ENCODE measurements at regions of chr14 and their contacts with region 1.

Region 1: GRCh38 chr14:105351920-105352851 is 37.6 kb downstream of the PACS2 start:
- DNase-seq: peak; percentile 84 to 86 (median 85)
- H3K4me3 ChIP-seq: no peak overlapping the region
- H3K4me3 Mint-ChIP-seq: no peak overlapping the region
- H3K27ac ChIP-seq: no peak overlapping the region
- H3K27ac Mint-ChIP-seq: peak overlapping the region in 3 of 7 donors; percentile 46 to 70 (median 48)
- H3K4me1 ChIP-seq: no peaks in the 10 kb centered on the region
- H3K4me1 Mint-ChIP-seq: peaks cover 3 to 4% (median 3%) of the 10 kb centered on the region in 4 donors
- H3K27me3 ChIP-seq: no peaks in the 10 kb centered on the region
- H3K27me3 Mint-ChIP-seq: no peaks in the 10 kb centered on the region

Region 2: GRCh38 chr14:104976198-104977007 is 375.8 kb before region 1 on chr14:
- CTCF ChIA-PET with region 1: no interaction called
- POLR2A ChIA-PET with region 1: no interaction called
- intact Hi-C with region 1: loop called (anchors 1 kb)
- DNase-seq: peak; percentile 80 to 87 (median 82)
- H3K4me3 ChIP-seq: no peak overlapping the region
- H3K4me3 Mint-ChIP-seq: peak overlapping the region; percentile 35 to 88 (median 64)
- H3K27ac ChIP-seq: no peak overlapping the region
- H3K27ac Mint-ChIP-seq: peak overlapping the region in 5 of 7 donors; percentile 19 to 66 (median 56)
- H3K4me1 ChIP-seq: peaks cover 17% of the 10 kb centered on the region
- H3K4me1 Mint-ChIP-seq: peaks cover 4 to 26% (median 13%) of the 10 kb centered on the region in 4 donors
- H3K27me3 ChIP-seq: peaks cover 13% of the 10 kb centered on the region
- H3K27me3 Mint-ChIP-seq: peaks cover 8 to 18% of the 10 kb centered on the region in 2 donors

Region 3: GRCh38 chr14:105086833-105087307 is 265.3 kb before region 1 on chr14:
- CTCF ChIA-PET with region 1: interaction called, 24 read pairs
- POLR2A ChIA-PET with region 1: interaction called, 3 read pairs
- intact Hi-C with region 1: no loop called
- DNase-seq: peak; percentile 81 to 87 (median 84)
- H3K4me3 ChIP-seq: peak overlapping the region; percentile 23 to 57
- H3K4me3 Mint-ChIP-seq: peak overlapping the region; percentile 71 to 83 (median 78)
- H3K27ac ChIP-seq: peak overlapping the region; percentile 26
- H3K27ac Mint-ChIP-seq: peak overlapping the region in 3 of 7 donors; percentile 15 to 91 (median 77)
- H3K4me1 ChIP-seq: peaks cover 23% of the 10 kb centered on the region
- H3K4me1 Mint-ChIP-seq: peaks cover 13 to 24% (median 16%) of the 10 kb centered on the region in 4 donors
- H3K27me3 ChIP-seq: no peaks in the 10 kb centered on the region
- H3K27me3 Mint-ChIP-seq: peaks cover 0 to 1% of the 10 kb centered on the region in 2 donors

Region 4: GRCh38 chr14:105193916-105194782 is 158.0 kb before region 1 on chr14:
- CTCF ChIA-PET with region 1: interaction called, 3 read pairs
- POLR2A ChIA-PET with region 1: no interaction called
- intact Hi-C with region 1: loop called (anchors 2 kb)
- DNase-seq: peak in 1 of 5 donors; percentile 66
- H3K4me3 ChIP-seq: no peak overlapping the region
- H3K4me3 Mint-ChIP-seq: peak overlapping the region in 7 of 8 donors; percentile 21 to 74 (median 34)
- H3K27ac ChIP-seq: no peak overlapping the region
- H3K27ac Mint-ChIP-seq: peak overlapping the region in 3 of 7 donors; percentile 64 to 91 (median 79)
- H3K4me1 ChIP-seq: peaks cover 47% of the 10 kb centered on the region
- H3K4me1 Mint-ChIP-seq: peaks cover 14 to 39% (median 21%) of the 10 kb centered on the region in 4 donors
- H3K27me3 ChIP-seq: peaks cover 8% of the 10 kb centered on the region
- H3K27me3 Mint-ChIP-seq: peaks cover 17 to 23% of the 10 kb centered on the region in 2 donors

Region 5: DNA sequence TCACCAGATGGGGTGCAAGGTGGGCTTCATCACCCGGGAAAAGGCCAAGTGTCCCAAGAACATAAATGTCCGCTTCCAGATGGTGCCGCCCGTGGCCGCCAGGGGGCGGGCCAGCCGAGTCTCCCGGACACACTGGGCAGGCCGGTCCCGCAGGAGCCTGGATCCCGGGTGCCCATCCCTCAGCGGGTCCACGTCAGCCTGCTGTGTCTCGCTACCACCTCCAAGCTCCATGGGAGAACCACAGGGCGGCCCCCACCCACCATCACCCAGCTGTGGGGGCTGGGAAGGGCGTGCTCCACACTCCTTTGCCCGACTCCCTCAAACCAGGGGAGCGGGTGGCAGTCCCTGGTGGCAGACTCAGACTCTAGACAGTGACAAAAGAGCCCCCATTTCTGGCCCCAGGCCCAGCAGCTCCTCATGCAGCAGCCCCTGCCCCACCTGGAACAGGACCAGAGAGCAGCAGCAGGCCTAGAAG is 149.1 kb before region 1 on chr14:
- CTCF ChIA-PET with region 1: interaction called, 35 read pairs
- POLR2A ChIA-PET with region 1: interaction called, 4 read pairs
- intact Hi-C with region 1: loop called (anchors 1 kb)
- DNase-seq: peak; percentile 49 to 63 (median 53)
- H3K4me3 ChIP-seq: no peak overlapping the region
- H3K4me3 Mint-ChIP-seq: no peak overlapping the region
- H3K27ac ChIP-seq: no peak overlapping the region
- H3K27ac Mint-ChIP-seq: peak overlapping the region in 1 of 7 donors; percentile 40
- H3K4me1 ChIP-seq: peaks cover 21% of the 10 kb centered on the region
- H3K4me1 Mint-ChIP-seq: peaks cover 3 to 22% (median 13%) of the 10 kb centered on the region in 4 donors
- H3K27me3 ChIP-seq: no peaks in the 10 kb centered on the region
- H3K27me3 Mint-ChIP-seq: peaks cover 11 to 14% of the 10 kb centered on the region in 2 donors

Region 6: DNA sequence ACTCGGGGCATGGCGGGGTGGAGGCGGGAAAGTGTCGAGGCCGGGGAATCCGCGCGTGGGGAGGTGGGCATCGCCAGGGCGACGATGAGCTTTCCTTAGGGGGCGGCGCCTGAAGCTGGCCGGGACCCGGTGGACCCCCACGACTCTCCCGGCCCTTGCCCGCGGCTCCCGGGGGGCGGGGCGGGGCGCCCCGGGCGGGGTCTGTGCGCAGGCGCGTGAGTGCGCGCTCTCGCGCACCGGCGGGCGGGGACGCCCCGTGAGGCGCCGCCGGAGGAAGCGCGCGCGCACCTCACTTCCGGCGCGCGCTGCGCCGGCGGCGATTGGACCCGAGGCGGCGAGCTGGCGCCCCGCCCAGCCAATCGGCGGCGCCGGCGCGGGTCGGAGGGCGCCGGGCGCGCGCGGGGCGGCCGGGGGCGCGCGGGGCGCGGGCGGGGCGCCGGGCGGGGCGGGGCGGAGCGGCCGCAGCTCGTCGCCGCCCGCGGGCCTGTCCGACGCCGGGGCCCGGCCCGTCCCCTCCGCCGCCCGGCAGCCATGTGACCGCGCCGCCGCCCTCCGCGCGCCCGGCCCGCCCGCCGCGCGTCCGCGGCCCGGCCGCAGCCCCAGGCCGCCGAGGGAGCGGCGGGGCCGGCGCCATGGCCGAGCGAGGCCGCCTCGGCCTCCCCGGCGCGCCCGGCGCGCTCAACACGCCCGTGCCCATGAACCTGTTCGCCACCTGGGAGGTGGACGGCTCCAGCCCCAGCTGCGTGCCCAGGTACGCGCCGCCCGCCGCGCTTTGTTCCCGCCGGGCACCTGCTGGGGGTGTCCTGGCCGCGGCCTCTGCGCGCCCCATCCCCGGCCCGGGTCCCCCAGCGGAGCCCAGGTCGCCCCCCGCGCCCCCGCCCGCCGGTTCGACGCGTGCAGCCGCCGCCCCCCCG is 37.6 kb before region 1 on chr14 and contains the start of gene PACS2:
- CTCF ChIA-PET with region 1: interaction called, 5 read pairs
- POLR2A ChIA-PET with region 1: interaction called, 3 read pairs
- intact Hi-C with region 1: loop called (anchors 1 kb)
- DNase-seq: peak; percentile 61 to 87 (median 83)
- H3K4me3 ChIP-seq: peak within 1 kb of the TSS; percentile 49 to 52
- H3K4me3 Mint-ChIP-seq: peak within 1 kb of the TSS; percentile 84 to 93 (median 86)
- H3K27ac ChIP-seq: peak within 1 kb of the TSS; percentile 62
- H3K27ac Mint-ChIP-seq: peak within 1 kb of the TSS; percentile 86 to 94 (median 90)
- H3K4me1 ChIP-seq: peaks cover 22% of the 10 kb centered on the region
- H3K4me1 Mint-ChIP-seq: peaks cover 7 to 31% (median 22%) of the 10 kb centered on the region in 4 donors
- H3K27me3 ChIP-seq: no peaks in the 10 kb centered on the region
- H3K27me3 Mint-ChIP-seq: no peaks in the 10 kb centered on the region
- total RNA-seq, gene PACS2: 70.9 to 76.6 TPM

Region 7: DNA sequence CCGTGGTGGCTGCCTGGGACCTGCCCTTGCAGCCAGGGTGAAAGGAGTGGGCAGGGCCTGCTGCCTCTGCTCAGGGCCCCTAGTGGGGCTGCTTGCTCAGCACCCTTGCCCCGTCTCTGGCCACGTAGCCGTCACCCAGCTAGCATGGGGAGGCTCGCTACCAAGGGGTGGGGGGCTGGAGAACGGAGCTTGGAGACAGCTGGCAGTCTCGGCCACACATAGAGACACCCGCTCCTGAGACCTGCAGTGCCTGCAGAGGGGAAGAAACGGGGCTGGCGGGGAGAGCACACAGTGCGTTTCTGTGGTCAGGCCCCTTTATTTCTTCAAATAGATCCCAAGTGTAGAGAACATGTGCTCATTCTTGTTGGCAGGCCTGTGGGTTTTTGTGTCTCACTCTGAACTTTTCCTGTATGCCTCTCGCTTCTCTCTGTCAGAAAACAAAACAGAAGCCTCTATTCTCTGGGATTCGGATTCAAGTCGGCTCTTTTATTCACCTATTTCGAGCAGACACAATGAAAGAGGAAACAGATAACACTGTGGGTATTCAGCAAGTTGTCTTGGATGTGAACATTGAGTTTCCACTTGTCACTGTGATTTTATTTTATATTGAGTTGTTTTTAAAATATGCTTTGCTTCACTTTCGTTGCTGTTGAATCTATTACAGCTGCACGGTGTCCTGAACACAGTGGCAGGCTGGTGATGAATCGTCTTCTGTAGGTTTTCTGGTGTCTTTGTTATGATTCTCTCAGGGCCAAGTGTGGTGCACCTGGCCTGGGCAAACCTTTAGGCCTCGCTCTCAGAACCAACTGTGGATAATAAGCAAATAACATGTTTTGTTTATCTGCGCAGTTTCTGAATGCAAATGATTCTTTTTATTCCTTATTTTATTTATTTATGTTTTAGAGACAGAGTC is 11.1 kb before region 1 on chr14:
- CTCF ChIA-PET with region 1: interaction called, 16 read pairs
- POLR2A ChIA-PET with region 1: interaction called, 3 read pairs
- intact Hi-C with region 1: no loop called
- DNase-seq: no peak
- H3K4me3 ChIP-seq: no peak overlapping the region
- H3K4me3 Mint-ChIP-seq: no peak overlapping the region
- H3K27ac ChIP-seq: no peak overlapping the region
- H3K27ac Mint-ChIP-seq: peak overlapping the region in 2 of 7 donors; percentile 22 to 64
- H3K4me1 ChIP-seq: no peaks in the 10 kb centered on the region
- H3K4me1 Mint-ChIP-seq: peaks cover 3 to 15% (median 7%) of the 10 kb centered on the region in 4 donors
- H3K27me3 ChIP-seq: no peaks in the 10 kb centered on the region
- H3K27me3 Mint-ChIP-seq: no peaks in the 10 kb centered on the region

Region 8: GRCh38 chr14:105375635-105376057 is 23.5 kb after region 1 on chr14:
- CTCF ChIA-PET with region 1: no interaction called
- POLR2A ChIA-PET with region 1: no interaction called
- intact Hi-C with region 1: no loop called
- DNase-seq: no peak
- H3K4me3 ChIP-seq: no peak overlapping the region
- H3K4me3 Mint-ChIP-seq: no peak overlapping the region
- H3K27ac ChIP-seq: no peak overlapping the region
- H3K27ac Mint-ChIP-seq: peak overlapping the region in 1 of 7 donors; percentile 44
- H3K4me1 ChIP-seq: no peaks in the 10 kb centered on the region
- H3K4me1 Mint-ChIP-seq: peaks cover 9 to 14% (median 12%) of the 10 kb centered on the region in 4 donors
- H3K27me3 ChIP-seq: no peaks in the 10 kb centered on the region
- H3K27me3 Mint-ChIP-seq: no peaks in the 10 kb centered on the region

Measured in CD4-positive, alpha-beta memory T cell (primary cell).